ENCODE measurements at regions of chr10 and their contacts with region 1.

Region 1: GRCh38 chr10:87094373-87095235 is at the starts of genes GLUD1 and SHLD2:
- DNase-seq: peak; percentile 91 to 92
- ATAC-seq: peak; percentile 82 to 93 (median 84)
- H3K4me3 ChIP-seq: peak within 1 kb of the TSS; percentile 56 to 94 (median 78)
- H3K27ac ChIP-seq: peak within 1 kb of the TSS; percentile 96 to 99 (median 98)
- H3K4me1 ChIP-seq: peaks cover 0 to 58% (median 43%) of the 10 kb centered on the region in 9 donors
- H3K27me3 ChIP-seq: no peaks in the 10 kb centered on the region
- CTCF ChIP-seq: peak in 1 of 9 donors; percentile 16
- total RNA-seq, gene GLUD1: 85.9 to 130 (median 119) TPM
- total RNA-seq, gene SHLD2: 9.5 to 16.1 (median 11.6) TPM

Region 2: DNA sequence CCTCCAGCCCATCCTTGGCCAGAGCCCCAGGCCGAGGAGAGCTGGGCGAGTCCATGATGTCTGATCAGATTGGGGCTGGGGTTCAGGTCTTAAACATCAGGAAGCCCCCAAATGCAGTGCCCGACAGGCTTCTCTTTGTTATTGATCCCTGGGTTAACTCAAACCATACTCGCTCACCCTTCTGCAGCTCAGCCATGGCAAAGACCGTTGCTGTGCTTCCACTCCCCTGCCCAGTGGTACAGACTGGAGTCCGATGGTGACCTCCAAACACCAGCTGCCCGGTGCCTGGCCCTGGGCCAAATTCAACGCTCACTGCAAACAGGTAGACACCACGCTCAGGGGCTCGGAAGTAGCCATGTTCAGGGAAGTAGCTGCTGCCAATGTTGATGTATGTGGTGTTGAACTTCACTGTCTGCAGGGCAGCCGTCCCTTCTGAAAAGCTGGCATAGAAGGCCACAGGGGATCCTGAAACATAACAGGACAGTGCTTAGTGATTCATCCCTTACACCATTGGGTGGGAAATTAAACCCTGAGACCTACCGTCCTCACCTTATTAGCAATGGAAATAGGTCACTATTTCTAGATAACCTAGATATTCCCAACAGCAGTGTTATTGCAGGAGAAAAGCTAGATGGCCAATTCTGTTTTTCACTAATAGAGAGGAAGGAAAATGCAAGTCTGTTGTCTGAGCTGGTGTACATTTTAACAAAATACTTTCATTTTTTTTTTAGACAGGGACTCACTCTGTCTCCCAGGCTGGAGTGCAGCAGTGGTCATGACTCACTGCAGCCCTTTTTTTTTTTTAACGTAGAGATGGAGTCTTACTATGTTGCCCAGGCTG is 157.7 kb before region 1 on chr10:
- intact Hi-C with region 1: loop called in 3 of 10 experiments (anchors 5 to 10 kb)
- DNase-seq: no peak
- ATAC-seq: no peak
- H3K4me3 ChIP-seq: no peak overlapping the region
- H3K27ac ChIP-seq: no peak overlapping the region
- H3K4me1 ChIP-seq: peaks cover 0 to 24% (median 15%) of the 10 kb centered on the region in 9 donors
- H3K27me3 ChIP-seq: no peaks in the 10 kb centered on the region
- CTCF ChIP-seq: no peak

Region 3: DNA sequence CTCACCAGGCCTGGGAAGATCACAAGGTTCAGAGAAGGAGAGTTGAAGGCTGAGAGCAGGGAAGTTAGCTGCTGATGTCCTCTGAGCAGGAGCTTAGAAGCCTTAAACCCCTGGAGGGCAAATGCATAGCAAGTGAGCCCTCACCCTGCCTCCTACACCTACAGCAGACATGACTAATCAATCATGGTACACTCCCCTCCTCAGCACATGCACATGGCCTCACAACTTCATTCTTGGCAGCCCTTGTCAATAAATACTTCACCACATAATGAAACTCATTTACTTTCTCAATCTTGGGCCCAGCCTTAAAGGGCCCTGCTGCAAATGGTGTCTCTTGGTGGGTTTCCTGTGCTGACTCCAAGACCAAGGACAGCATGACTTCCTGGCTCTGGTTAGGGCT is 150.1 kb before region 1 on chr10:
- intact Hi-C with region 1: loop called in 3 of 10 experiments (anchors 5 to 10 kb)
- DNase-seq: no peak
- ATAC-seq: no peak
- H3K4me3 ChIP-seq: no peak overlapping the region
- H3K27ac ChIP-seq: peak overlapping the region in 1 of 10 donors; percentile 34
- H3K4me1 ChIP-seq: peaks cover 6 to 70% (median 29%) of the 10 kb centered on the region in 9 donors
- H3K27me3 ChIP-seq: no peaks in the 10 kb centered on the region
- CTCF ChIP-seq: no peak

Region 4: GRCh38 chr10:86971232-86971991 is 123.2 kb before region 1 on chr10:
- intact Hi-C with region 1: loop called in 2 of 10 experiments (anchors 5 to 10 kb)
- DNase-seq: peak; percentile 89
- ATAC-seq: peak; percentile 80 to 90 (median 84)
- H3K4me3 ChIP-seq: peak overlapping the region in 9 of 10 donors; percentile 62 to 79 (median 70)
- H3K27ac ChIP-seq: peak overlapping the region; percentile 85 to 98 (median 94)
- H3K4me1 ChIP-seq: peaks cover 13 to 57% (median 44%) of the 10 kb centered on the region in 9 donors
- H3K27me3 ChIP-seq: peaks cover 0 to 47% (median 0%) of the 10 kb centered on the region in 7 donors
- CTCF ChIP-seq: peak in 3 of 9 donors; percentile 3 to 21 (median 14)

Region 5: DNA sequence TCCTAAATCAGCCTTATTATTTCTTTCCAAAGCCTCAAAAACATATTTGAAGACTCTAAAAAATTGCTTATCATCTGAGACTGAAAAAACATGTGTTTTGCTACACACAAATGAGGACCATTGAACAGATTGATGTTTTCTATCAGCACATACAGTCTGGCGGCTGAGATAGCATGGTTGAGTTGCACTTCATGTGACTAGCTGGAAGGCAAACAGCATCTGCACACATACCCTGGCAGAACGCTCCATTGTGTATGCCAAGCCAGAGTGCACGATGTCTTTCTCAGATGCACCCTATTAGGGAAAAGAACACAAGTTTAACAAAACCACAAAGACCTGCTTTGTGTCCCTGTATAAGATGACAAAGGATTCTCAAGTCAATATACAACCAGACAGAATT is 41.5 kb before region 1 on chr10:
- intact Hi-C with region 1: no loop called
- DNase-seq: peak in 1 of 2 donors; percentile 47
- ATAC-seq: peak; percentile 75 to 97 (median 85)
- H3K4me3 ChIP-seq: no peak overlapping the region
- H3K27ac ChIP-seq: peak overlapping the region in 2 of 10 donors; percentile 2 to 18
- H3K4me1 ChIP-seq: peaks cover 0 to 32% (median 14%) of the 10 kb centered on the region in 9 donors
- H3K27me3 ChIP-seq: no peaks in the 10 kb centered on the region
- CTCF ChIP-seq: no peak